ENCODE measurements at regions of chr9 and their contacts with region 1.

Region 1: DNA sequence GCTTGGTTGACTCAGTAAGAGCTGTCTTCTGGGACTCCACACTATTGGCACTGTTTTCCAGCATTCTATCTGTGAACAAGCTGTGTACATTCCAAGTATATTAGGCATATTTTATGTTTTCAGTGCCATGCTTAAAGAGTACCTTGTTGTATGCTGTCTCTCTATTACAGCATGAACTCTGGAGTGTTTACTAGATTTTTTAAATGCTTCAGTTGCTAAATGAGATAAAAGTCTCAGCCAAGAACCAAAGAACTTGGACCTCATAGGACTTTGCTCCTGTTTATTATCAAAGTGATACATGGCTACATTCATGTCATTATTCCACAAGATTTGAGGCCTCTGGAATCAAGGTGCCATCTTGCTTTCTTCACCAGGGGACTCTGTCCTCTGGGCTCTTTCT is 167.2 kb downstream of the C9orf152 start:
- DNase-seq: no peak
- H3K4me3 Mint-ChIP-seq: no peak overlapping the region
- H3K27ac Mint-ChIP-seq: no peak overlapping the region
- H3K4me1 Mint-ChIP-seq: peaks cover 2% of the 10 kb centered on the region
- H3K27me3 Mint-ChIP-seq: peaks cover 5% of the 10 kb centered on the region

Region 2: GRCh38 chr9:110027671-110028081 is 13.1 kb before region 1 on chr9:
- intact Hi-C with region 1: loop called (anchors 1 kb)
- DNase-seq: no peak
- H3K4me3 Mint-ChIP-seq: no peak overlapping the region
- H3K27ac Mint-ChIP-seq: no peak overlapping the region
- H3K4me1 Mint-ChIP-seq: peaks cover 17% of the 10 kb centered on the region
- H3K27me3 Mint-ChIP-seq: peaks cover 2% of the 10 kb centered on the region

Region 3: DNA sequence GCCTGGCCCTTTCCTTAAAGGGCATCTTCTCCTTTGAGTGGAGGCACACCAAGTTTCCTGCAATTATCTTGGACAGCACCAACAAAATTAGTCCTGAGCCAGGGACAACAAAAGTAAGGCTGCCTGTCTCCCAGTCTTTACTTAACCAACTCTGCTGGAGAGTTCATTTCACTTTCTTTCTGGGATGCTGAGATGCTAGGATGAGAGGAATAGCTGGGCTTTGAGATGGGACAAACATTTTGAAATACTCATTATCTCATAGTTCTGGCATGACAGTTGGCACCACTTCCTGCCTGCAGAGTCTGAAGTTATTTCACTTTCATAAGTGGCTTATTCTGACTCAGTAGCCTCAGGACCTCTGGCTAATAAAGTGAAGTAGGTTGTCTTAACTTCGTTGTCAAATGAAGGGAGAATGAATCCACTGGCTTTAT is 10.2 kb after region 1 on chr9:
- intact Hi-C with region 1: no loop called
- DNase-seq: peak; percentile 78
- H3K4me3 Mint-ChIP-seq: peak overlapping the region; percentile 98
- H3K27ac Mint-ChIP-seq: peak overlapping the region; percentile 81
- H3K4me1 Mint-ChIP-seq: peaks cover 46% of the 10 kb centered on the region
- H3K27me3 Mint-ChIP-seq: peaks cover 6% of the 10 kb centered on the region

Region 4: GRCh38 chr9:111483862-111484571 is 1443.2 kb after region 1 on chr9 and contains the start of gene ECPAS:
- intact Hi-C with region 1: no loop called
- DNase-seq: peak; percentile 90
- H3K4me3 Mint-ChIP-seq: peak within 1 kb of the TSS; percentile 89
- H3K27ac Mint-ChIP-seq: peak within 1 kb of the TSS; percentile 76
- H3K4me1 Mint-ChIP-seq: peaks cover 29% of the 10 kb centered on the region
- H3K27me3 Mint-ChIP-seq: peaks cover 12% of the 10 kb centered on the region
- total RNA-seq, gene ECPAS: 102 and 117 TPM in 2 replicates